ENCODE measurements at regions of chr13 and their contacts with region 1.

Region 1: DNA sequence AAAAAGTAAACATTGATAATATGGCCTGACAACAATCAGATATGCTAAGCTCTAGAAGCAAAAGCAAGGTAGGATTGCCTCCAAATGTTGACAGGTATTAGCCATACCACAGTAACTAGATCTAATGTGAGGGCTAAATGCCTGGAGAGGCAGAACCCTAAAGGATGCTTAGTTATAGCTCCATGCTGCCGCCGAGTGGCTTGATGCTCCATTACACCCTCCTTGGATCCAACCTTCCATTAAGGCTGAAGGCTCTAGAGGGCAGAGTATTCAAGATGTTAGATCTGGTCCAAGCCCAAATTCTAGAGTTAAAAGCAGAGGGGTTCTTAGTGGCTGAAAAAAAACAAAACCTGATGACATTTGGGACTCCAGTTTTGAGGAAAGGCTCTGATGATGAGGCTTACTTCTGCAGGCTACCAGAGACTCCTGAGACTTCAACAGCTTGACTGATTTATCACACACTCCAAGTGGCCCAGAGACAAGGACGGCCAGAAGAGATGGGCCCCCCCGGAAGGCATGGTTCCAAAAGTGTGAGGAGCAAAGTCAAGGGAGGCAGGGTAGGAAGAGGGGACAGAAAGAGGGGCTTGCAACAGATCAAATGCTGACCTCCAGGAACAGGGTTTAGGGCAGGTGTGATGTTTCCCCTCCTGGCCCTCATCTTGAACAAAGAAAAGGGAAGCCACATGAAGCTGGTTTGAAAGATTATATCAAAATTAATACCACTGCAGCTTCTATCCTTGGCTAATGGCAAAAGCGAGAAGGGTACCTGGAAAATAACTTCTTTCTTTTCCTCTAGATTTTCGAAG is 21.9 kb upstream of the CPB2 start:
- DNase-seq: peak; percentile 75
- ATAC-seq: peak; percentile 97
- H3K4me3 ChIP-seq: no peak overlapping the region
- H3K27ac ChIP-seq: no peak overlapping the region
- H3K4me1 ChIP-seq: peaks cover 48% of the 10 kb centered on the region
- H3K27me3 ChIP-seq: no peaks in the 10 kb centered on the region
- CTCF ChIP-seq: peak; percentile 95
- EP300 ChIP-seq: no peak
- POLR2A ChIP-seq: no peak
- RAD21 ChIP-seq: peak; percentile 88

Region 2: GRCh38 chr13:45807520-45808099 is 319.1 kb before region 1 on chr13:
- CTCF ChIA-PET with region 1: interaction called, 5 read pairs
- POLR2A ChIA-PET with region 1: no interaction called
- in situ Hi-C with region 1: no loop called
- intact Hi-C with region 1: loop called (anchors 1 kb)
- DNase-seq: peak; percentile 60
- ATAC-seq: peak; percentile 93
- H3K4me3 ChIP-seq: no peak overlapping the region
- H3K27ac ChIP-seq: no peak overlapping the region
- H3K4me1 ChIP-seq: no peaks in the 10 kb centered on the region
- H3K27me3 ChIP-seq: no peaks in the 10 kb centered on the region
- CTCF ChIP-seq: peak; percentile 78
- EP300 ChIP-seq: no peak
- POLR2A ChIP-seq: no peak
- RAD21 ChIP-seq: peak; percentile 36; the same call in 1 of the 2 replicates

Region 3: DNA sequence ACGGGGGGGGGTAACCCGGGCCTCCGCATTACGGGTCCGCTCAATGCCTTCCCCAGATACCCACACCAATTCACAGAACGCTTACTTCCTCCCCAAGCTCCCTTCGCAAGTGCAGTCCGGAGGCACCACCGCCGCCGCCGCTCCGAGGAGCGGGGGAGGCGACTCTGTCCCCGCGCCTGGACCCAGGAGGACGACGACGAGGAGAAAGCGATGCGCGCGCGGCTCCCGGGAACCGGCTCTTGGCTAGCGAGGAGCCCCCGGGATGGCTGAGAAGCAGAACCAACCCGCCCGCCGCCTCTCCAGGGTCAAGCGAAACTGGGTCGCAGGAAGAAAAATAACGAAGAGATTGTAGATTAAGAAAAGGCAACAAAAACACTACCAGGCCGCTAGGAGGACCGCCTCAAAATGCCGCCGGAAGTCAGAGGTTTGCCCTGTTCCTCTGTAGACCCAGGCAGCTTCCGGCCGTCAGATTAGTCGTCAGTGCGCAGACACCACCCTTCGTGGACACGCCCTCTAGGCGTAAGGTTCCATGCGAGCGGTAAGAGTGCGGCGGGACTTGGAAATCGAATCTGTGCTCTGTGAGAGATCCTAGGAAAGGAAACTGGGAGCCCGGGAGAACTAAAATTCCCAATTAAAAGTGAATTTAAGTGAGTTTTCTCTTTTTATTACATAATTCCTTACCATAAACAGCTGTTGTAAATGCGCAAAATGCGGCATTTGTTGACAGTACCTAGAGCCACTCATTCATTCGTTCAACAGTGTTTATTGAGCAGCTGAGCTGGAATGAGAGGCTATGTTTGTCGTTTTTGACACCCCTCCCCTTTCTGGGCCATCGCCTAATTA is 74.2 kb before region 1 on chr13 and contains the start of gene ZC3H13:
- CTCF ChIA-PET with region 1: no interaction called
- POLR2A ChIA-PET with region 1: no interaction called
- in situ Hi-C with region 1: no loop called
- intact Hi-C with region 1: loop called (anchors 5 kb)
- DNase-seq: peak; percentile 94
- ATAC-seq: peak; percentile 100
- H3K4me3 ChIP-seq: peak within 1 kb of the TSS; percentile 84 to 99 (median 87)
- H3K27ac ChIP-seq: peak within 1 kb of the TSS; percentile 87
- H3K4me1 ChIP-seq: peaks cover 31% of the 10 kb centered on the region
- H3K27me3 ChIP-seq: no peaks in the 10 kb centered on the region; a peak in 1 of 5 replicates
- CTCF ChIP-seq: peak; percentile 48
- EP300 ChIP-seq: no peak
- POLR2A ChIP-seq: peak; percentile 81 to 83
- RAD21 ChIP-seq: no peak
- total RNA-seq, gene ZC3H13: 23.5 and 30.4 TPM in 2 replicates

Region 4: DNA sequence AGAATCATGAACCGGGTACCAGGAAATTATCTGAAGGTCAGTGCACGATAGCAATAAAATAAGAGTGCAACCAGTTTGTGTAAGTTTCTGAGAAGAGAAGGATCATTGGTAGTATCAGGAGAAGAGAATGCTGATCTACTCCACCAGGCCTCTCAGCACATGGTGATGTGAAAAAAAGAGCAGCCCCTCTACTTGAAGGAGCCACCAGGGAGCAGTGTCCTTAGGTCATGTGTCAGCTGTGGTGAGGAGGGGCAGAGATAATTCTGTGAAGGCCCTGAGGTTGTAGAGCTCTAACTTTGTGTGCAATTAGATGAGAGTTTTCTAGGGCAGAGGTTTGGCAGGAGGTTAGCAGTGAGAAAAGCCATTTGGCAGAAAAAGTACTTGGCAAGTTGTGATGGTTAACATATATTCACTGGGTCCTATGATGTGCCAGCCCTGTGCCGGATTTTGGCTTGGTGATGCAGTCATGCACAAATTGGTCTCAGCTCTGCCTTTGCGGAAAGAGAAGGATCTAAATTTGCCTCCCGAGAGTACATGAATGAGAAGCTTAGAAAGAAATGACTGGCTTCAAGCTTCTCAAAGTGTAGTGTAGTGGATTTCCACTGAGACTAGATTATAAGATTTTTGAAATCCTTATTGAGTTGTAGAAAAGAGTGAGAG is 55.0 kb before region 1 on chr13:
- CTCF ChIA-PET with region 1: interaction called, 27 read pairs
- POLR2A ChIA-PET with region 1: no interaction called
- in situ Hi-C with region 1: loop called (anchors 5 kb)
- intact Hi-C with region 1: loop called (anchors 1 kb)
- DNase-seq: peak; percentile 43
- ATAC-seq: peak; percentile 93
- H3K4me3 ChIP-seq: no peak overlapping the region
- H3K27ac ChIP-seq: no peak overlapping the region
- H3K4me1 ChIP-seq: no peaks in the 10 kb centered on the region
- H3K27me3 ChIP-seq: no peaks in the 10 kb centered on the region
- CTCF ChIP-seq: peak; percentile 43
- EP300 ChIP-seq: no peak
- POLR2A ChIP-seq: no peak
- RAD21 ChIP-seq: no peak

Region 5: GRCh38 chr13:46106839-46107371 is 19.9 kb before region 1 on chr13:
- CTCF ChIA-PET with region 1: no interaction called
- POLR2A ChIA-PET with region 1: no interaction called
- in situ Hi-C with region 1: no loop called
- intact Hi-C with region 1: loop called (anchors 1 kb)
- DNase-seq: no peak
- ATAC-seq: no peak
- H3K4me3 ChIP-seq: no peak overlapping the region
- H3K27ac ChIP-seq: peak overlapping the region; percentile 29
- H3K4me1 ChIP-seq: peaks cover 87% of the 10 kb centered on the region
- H3K27me3 ChIP-seq: no peaks in the 10 kb centered on the region
- CTCF ChIP-seq: no peak
- EP300 ChIP-seq: no peak
- POLR2A ChIP-seq: no peak
- RAD21 ChIP-seq: no peak

Region 6: GRCh38 chr13:46146899-46147298 is 20.1 kb after region 1 on chr13:
- CTCF ChIA-PET with region 1: interaction called, 4 read pairs
- POLR2A ChIA-PET with region 1: interaction called, 7 read pairs
- in situ Hi-C with region 1: no loop called
- intact Hi-C with region 1: loop called (anchors 2 kb)
- DNase-seq: peak; percentile 56
- ATAC-seq: peak; percentile 70
- H3K4me3 ChIP-seq: no peak overlapping the region
- H3K27ac ChIP-seq: no peak overlapping the region
- H3K4me1 ChIP-seq: peaks cover 60% of the 10 kb centered on the region
- H3K27me3 ChIP-seq: no peaks in the 10 kb centered on the region
- CTCF ChIP-seq: peak; percentile 91
- EP300 ChIP-seq: no peak
- POLR2A ChIP-seq: no peak
- RAD21 ChIP-seq: peak; percentile 84

Region 7: DNA sequence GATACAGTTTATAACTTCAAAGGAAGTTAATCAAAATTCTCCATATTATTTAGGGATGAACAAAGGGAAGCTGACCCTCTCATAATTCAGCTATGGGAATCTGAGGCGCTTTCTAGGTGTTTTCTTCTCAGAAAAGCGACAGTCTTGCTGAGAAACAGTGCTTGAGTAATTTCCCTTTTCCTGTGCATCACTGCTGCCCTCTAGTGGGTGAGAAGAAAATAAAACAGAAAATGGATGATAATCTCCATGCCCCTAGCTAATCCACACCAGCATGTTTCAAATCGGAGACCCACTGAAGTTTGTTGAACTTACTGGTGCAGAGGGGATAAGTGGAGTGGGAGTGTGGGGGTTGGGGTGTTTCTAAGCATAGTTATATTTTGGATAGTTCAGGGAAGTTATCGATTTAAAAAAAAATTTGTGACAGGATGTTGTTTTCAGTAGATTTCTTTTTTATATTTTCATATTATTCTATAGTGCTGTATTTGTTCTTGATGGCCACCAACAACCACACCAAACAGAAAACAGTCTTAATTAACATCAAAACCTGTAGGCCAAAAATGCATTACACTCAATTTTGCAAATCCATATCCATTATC is 33.8 kb after region 1 on chr13:
- CTCF ChIA-PET with region 1: interaction called, 30 read pairs
- POLR2A ChIA-PET with region 1: no interaction called
- in situ Hi-C with region 1: no loop called
- intact Hi-C with region 1: loop called (anchors 2 kb)
- DNase-seq: peak; percentile 58
- ATAC-seq: peak; percentile 64
- H3K4me3 ChIP-seq: no peak overlapping the region
- H3K27ac ChIP-seq: no peak overlapping the region
- H3K4me1 ChIP-seq: peaks cover 14% of the 10 kb centered on the region
- H3K27me3 ChIP-seq: no peaks in the 10 kb centered on the region
- CTCF ChIP-seq: peak; percentile 82
- EP300 ChIP-seq: no peak
- POLR2A ChIP-seq: no peak
- RAD21 ChIP-seq: peak; percentile 71

Region 8: DNA sequence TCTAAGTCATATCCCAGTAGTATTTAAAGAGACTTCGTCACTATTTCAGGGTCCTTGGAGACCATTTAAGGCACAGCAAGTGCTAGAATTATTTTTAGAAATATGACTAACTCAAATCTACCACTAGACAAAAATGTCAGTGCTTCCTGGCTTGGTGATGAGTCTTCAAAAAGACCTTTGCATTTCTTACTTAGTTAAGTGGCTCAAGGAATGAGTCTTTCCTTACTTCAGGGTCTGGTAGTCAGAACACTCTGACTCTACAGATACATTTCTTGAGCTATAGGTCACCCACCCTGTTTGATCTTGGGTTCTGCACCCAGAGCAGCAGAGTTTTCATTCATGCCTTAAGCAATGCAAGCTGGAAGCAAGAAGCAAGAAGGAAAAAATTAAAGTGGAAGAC is 961.1 kb after region 1 on chr13:
- CTCF ChIA-PET with region 1: no interaction called
- POLR2A ChIA-PET with region 1: no interaction called
- in situ Hi-C with region 1: no loop called
- intact Hi-C with region 1: no loop called
- DNase-seq: no peak
- ATAC-seq: no peak
- H3K4me3 ChIP-seq: no peak overlapping the region
- H3K27ac ChIP-seq: no peak overlapping the region
- H3K4me1 ChIP-seq: no peaks in the 10 kb centered on the region
- H3K27me3 ChIP-seq: no peaks in the 10 kb centered on the region
- CTCF ChIP-seq: no peak
- EP300 ChIP-seq: no peak
- POLR2A ChIP-seq: no peak
- RAD21 ChIP-seq: no peak

Region 9: GRCh38 chr13:47109028-47109427 is 982.3 kb after region 1 on chr13:
- CTCF ChIA-PET with region 1: no interaction called
- POLR2A ChIA-PET with region 1: no interaction called
- in situ Hi-C with region 1: no loop called
- intact Hi-C with region 1: no loop called
- DNase-seq: no peak
- ATAC-seq: no peak
- H3K4me3 ChIP-seq: no peak overlapping the region
- H3K27ac ChIP-seq: no peak overlapping the region
- H3K4me1 ChIP-seq: no peaks in the 10 kb centered on the region
- H3K27me3 ChIP-seq: no peaks in the 10 kb centered on the region; a peak in 1 of 5 replicates
- CTCF ChIP-seq: no peak
- EP300 ChIP-seq: no peak
- POLR2A ChIP-seq: no peak
- RAD21 ChIP-seq: no peak

Measured in HepG2 (cell line).